Naive thymus-derived CD8-positive, alpha-beta T cell (primary cell): ENCODE measurements at regions of chr20 and their contacts with region 1.

Region 1: GRCh38 chr20:38434743-38435554 is at the start of gene SNHG17:
- DNase-seq: peak; percentile 82 to 93 (median 87)
- ATAC-seq: peak; percentile 82 to 88
- H3K4me3 Mint-ChIP-seq: peak within 1 kb of the TSS; percentile 85 to 98 (median 94)
- H3K27ac Mint-ChIP-seq: peak within 1 kb of the TSS; percentile 88 to 99 (median 97)
- H3K4me1 Mint-ChIP-seq: peaks cover 20 to 45% (median 38%) of the 10 kb centered on the region in 4 donors
- H3K27me3 Mint-ChIP-seq: peaks cover 0 to 5% (median 3%) of the 10 kb centered on the region in 5 donors
- polyA plus RNA-seq, gene SNHG17: 33.8 to 127 (median 57.0) TPM

Region 2: GRCh38 chr20:38446441-38447209 is 11.7 kb after region 1 on chr20:
- POLR2A ChIA-PET with region 1: interaction called, 122 read pairs
- DNase-seq: peak; percentile 82 to 94 (median 91)
- ATAC-seq: peak; percentile 98
- H3K4me3 Mint-ChIP-seq: peak overlapping the region; percentile 77 to 94 (median 86)
- H3K27ac Mint-ChIP-seq: peak overlapping the region; percentile 85 to 95 (median 92)
- H3K4me1 Mint-ChIP-seq: peaks cover 24 to 32% (median 27%) of the 10 kb centered on the region in 4 donors
- H3K27me3 Mint-ChIP-seq: peaks cover 0 to 7% (median 0%) of the 10 kb centered on the region in 5 donors

Region 3: GRCh38 chr20:38460040-38460623 is 25.2 kb after region 1 on chr20:
- POLR2A ChIA-PET with region 1: no interaction called
- DNase-seq: no peak
- ATAC-seq: no peak
- H3K4me3 Mint-ChIP-seq: no peak overlapping the region
- H3K27ac Mint-ChIP-seq: peak overlapping the region in 1 of 10 donors; percentile 65
- H3K4me1 Mint-ChIP-seq: no peaks in the 10 kb centered on the region
- H3K27me3 Mint-ChIP-seq: peaks cover 0 to 3% (median 0%) of the 10 kb centered on the region in 5 donors